ENCODE measurements at regions of chr16 and their contacts with region 1.

Region 1: GRCh38 chr16:53130159-53131049 is 75.6 kb downstream of the CHD9 start:
- DNase-seq: peak; percentile 97 to 98
- H3K4me3 ChIP-seq: peak overlapping the region; percentile 98
- H3K4me3 Mint-ChIP-seq: peak overlapping the region; percentile 83
- H3K27ac Mint-ChIP-seq: peak overlapping the region; percentile 92
- H3K4me1 ChIP-seq: peaks cover 28% of the 10 kb centered on the region
- H3K4me1 Mint-ChIP-seq: peaks cover 26% of the 10 kb centered on the region
- H3K27me3 ChIP-seq: no peaks in the 10 kb centered on the region
- H3K27me3 Mint-ChIP-seq: no peaks in the 10 kb centered on the region
- CTCF ChIP-seq: peak; percentile 65 to 68

Region 2: GRCh38 chr16:53041320-53042051 is 88.9 kb before region 1 on chr16:
- CTCF ChIA-PET with region 1: no interaction called
- POLR2A ChIA-PET with region 1: no interaction called
- intact Hi-C with region 1: no loop called
- DNase-seq: peak; percentile 47 to 55
- H3K4me3 ChIP-seq: no peak overlapping the region
- H3K4me3 Mint-ChIP-seq: no peak overlapping the region
- H3K27ac Mint-ChIP-seq: no peak overlapping the region
- H3K4me1 ChIP-seq: peaks cover 17% of the 10 kb centered on the region; the same call in 1 of the 2 replicates
- H3K4me1 Mint-ChIP-seq: peaks cover 7% of the 10 kb centered on the region
- H3K27me3 ChIP-seq: no peaks in the 10 kb centered on the region
- H3K27me3 Mint-ChIP-seq: no peaks in the 10 kb centered on the region
- CTCF ChIP-seq: no peak

Region 3: GRCh38 chr16:53099318-53100130 is 30.9 kb before region 1 on chr16:
- CTCF ChIA-PET with region 1: no interaction called
- POLR2A ChIA-PET with region 1: interaction called, 3 read pairs
- intact Hi-C with region 1: loop called (anchors 1 kb)
- DNase-seq: peak; percentile 91 to 95
- H3K4me3 ChIP-seq: peak overlapping the region; percentile 46
- H3K4me3 Mint-ChIP-seq: peak overlapping the region; percentile 77
- H3K27ac Mint-ChIP-seq: peak overlapping the region; percentile 98
- H3K4me1 ChIP-seq: peaks cover 24% of the 10 kb centered on the region
- H3K4me1 Mint-ChIP-seq: peaks cover 12% of the 10 kb centered on the region
- H3K27me3 ChIP-seq: no peaks in the 10 kb centered on the region
- H3K27me3 Mint-ChIP-seq: no peaks in the 10 kb centered on the region
- CTCF ChIP-seq: no peak

Region 4: DNA sequence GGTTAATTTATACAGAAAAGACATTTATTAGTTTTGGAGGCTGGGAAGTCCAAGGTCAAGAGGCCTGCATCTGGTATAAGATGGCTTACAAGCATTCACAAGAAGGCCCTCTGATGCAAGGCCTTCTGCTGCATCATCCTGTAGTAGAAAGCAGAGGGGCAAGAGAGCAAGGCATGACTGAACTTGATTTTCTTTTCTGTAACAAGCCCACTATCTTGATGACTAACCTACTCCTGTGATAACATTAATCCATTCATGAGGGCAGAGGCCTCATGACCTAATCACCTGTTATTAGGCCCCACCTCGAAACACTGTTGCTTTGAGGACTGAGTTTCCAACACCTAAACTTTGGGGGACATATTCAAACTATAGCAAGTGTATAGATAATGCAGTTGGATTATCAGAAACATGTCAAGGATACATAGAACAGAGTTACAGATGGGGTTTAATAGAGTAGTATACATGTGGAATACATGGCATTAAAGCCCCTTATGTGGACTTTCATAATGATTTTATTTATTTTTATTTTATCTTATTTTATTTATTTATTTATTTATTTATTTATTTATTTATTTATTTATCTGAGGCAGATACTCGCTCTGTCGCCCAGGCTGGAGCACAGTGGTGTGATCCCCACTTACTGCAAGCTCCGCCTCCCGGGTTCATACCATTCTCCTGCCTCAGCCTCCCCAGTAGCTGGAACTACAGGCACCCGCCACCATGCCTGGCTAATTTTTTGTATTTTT is 12.6 kb after region 1 on chr16:
- CTCF ChIA-PET with region 1: no interaction called
- POLR2A ChIA-PET with region 1: no interaction called
- intact Hi-C with region 1: no loop called
- DNase-seq: peak; percentile 21 to 43
- H3K4me3 ChIP-seq: no peak overlapping the region
- H3K4me3 Mint-ChIP-seq: no peak overlapping the region
- H3K27ac Mint-ChIP-seq: no peak overlapping the region
- H3K4me1 ChIP-seq: peaks cover 8% of the 10 kb centered on the region
- H3K4me1 Mint-ChIP-seq: no peaks in the 10 kb centered on the region
- H3K27me3 ChIP-seq: no peaks in the 10 kb centered on the region
- H3K27me3 Mint-ChIP-seq: no peaks in the 10 kb centered on the region
- CTCF ChIP-seq: no peak

Region 5: GRCh38 chr16:53159781-53160436 is 29.5 kb after region 1 on chr16:
- CTCF ChIA-PET with region 1: no interaction called
- POLR2A ChIA-PET with region 1: no interaction called
- intact Hi-C with region 1: loop called (anchors 1 kb)
- DNase-seq: peak in 1 of 2 experiments; percentile 65
- H3K4me3 ChIP-seq: no peak overlapping the region
- H3K4me3 Mint-ChIP-seq: no peak overlapping the region
- H3K27ac Mint-ChIP-seq: no peak overlapping the region
- H3K4me1 ChIP-seq: no peaks in the 10 kb centered on the region
- H3K4me1 Mint-ChIP-seq: no peaks in the 10 kb centered on the region
- H3K27me3 ChIP-seq: no peaks in the 10 kb centered on the region
- H3K27me3 Mint-ChIP-seq: no peaks in the 10 kb centered on the region
- CTCF ChIP-seq: peak; percentile 76 to 89

Region 6: GRCh38 chr16:53207810-53208752 is 77.7 kb after region 1 on chr16:
- CTCF ChIA-PET with region 1: interaction called, 4 read pairs
- POLR2A ChIA-PET with region 1: interaction called, 4 read pairs
- intact Hi-C with region 1: loop called (anchors 1 kb)
- DNase-seq: peak; percentile 76 to 77
- H3K4me3 ChIP-seq: peak overlapping the region; percentile 43
- H3K4me3 Mint-ChIP-seq: peak overlapping the region; percentile 93
- H3K27ac Mint-ChIP-seq: peak overlapping the region; percentile 97
- H3K4me1 ChIP-seq: no peaks in the 10 kb centered on the region; the same call in 1 of the 2 replicates
- H3K4me1 Mint-ChIP-seq: peaks cover 14% of the 10 kb centered on the region
- H3K27me3 ChIP-seq: no peaks in the 10 kb centered on the region
- H3K27me3 Mint-ChIP-seq: no peaks in the 10 kb centered on the region
- CTCF ChIP-seq: peak; percentile 71 to 77

Region 7: GRCh38 chr16:53435066-53435688 is 304.8 kb after region 1 on chr16:
- CTCF ChIA-PET with region 1: no interaction called
- POLR2A ChIA-PET with region 1: no interaction called
- intact Hi-C with region 1: loop called (anchors 10 kb)
- DNase-seq: peak; percentile 85 to 88
- H3K4me3 ChIP-seq: peak overlapping the region; percentile 99
- H3K4me3 Mint-ChIP-seq: peak overlapping the region; percentile 99
- H3K27ac Mint-ChIP-seq: peak overlapping the region; percentile 96
- H3K4me1 ChIP-seq: peaks cover 17% of the 10 kb centered on the region
- H3K4me1 Mint-ChIP-seq: peaks cover 18% of the 10 kb centered on the region
- H3K27me3 ChIP-seq: no peaks in the 10 kb centered on the region
- H3K27me3 Mint-ChIP-seq: no peaks in the 10 kb centered on the region
- CTCF ChIP-seq: no peak